Right ventricle myocardium inferior (tissue), 1 donor: ENCODE measurements at regions of chr3 and their contacts with region 1.

Region 1: GRCh38 chr3:105166893-105167292 is 199.8 kb upstream of the ALCAM start:
- DNase-seq: no peak
- ATAC-seq: no peak

Region 2: GRCh38 chr3:104909198-104909597 is 257.7 kb before region 1 on chr3:
- intact Hi-C with region 1: loop called (anchors 5 kb)
- DNase-seq: no peak
- ATAC-seq: no peak

Region 3: DNA sequence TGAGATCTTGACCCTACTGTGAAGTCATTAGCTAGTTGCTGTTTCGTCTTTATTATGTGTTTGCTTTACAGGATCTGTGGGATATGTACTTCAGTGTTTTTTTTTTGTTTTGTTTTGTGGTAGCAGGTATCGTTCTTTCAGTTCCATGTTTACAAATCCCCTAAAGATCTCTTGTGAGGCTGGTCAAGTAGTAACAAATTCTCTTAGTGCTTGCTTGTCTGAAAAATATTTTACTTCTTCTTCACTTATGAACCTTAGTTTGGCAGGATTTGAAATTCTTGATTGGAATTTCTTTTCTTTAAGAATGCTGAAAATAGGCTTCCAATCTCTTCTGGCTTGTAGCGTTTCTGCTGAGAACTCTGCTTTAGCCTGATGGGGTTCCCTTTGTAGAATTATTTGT is 36.0 kb before region 1 on chr3:
- intact Hi-C with region 1: no loop called
- DNase-seq: no peak
- ATAC-seq: no peak